Panc1 (cell line): ENCODE measurements at regions of chr5 and their contacts with region 1.

Region 1: GRCh38 chr5:177035976-177036375 is 13.5 kb downstream of the ZNF346 start:
- DNase-seq: no peak
- ATAC-seq: no peak
- H3K4me3 ChIP-seq: no peak overlapping the region
- H3K27ac ChIP-seq: no peak overlapping the region
- H3K4me1 ChIP-seq: no peaks in the 10 kb centered on the region
- H3K27me3 ChIP-seq: no peaks in the 10 kb centered on the region
- CTCF ChIP-seq: no peak

Region 2: DNA sequence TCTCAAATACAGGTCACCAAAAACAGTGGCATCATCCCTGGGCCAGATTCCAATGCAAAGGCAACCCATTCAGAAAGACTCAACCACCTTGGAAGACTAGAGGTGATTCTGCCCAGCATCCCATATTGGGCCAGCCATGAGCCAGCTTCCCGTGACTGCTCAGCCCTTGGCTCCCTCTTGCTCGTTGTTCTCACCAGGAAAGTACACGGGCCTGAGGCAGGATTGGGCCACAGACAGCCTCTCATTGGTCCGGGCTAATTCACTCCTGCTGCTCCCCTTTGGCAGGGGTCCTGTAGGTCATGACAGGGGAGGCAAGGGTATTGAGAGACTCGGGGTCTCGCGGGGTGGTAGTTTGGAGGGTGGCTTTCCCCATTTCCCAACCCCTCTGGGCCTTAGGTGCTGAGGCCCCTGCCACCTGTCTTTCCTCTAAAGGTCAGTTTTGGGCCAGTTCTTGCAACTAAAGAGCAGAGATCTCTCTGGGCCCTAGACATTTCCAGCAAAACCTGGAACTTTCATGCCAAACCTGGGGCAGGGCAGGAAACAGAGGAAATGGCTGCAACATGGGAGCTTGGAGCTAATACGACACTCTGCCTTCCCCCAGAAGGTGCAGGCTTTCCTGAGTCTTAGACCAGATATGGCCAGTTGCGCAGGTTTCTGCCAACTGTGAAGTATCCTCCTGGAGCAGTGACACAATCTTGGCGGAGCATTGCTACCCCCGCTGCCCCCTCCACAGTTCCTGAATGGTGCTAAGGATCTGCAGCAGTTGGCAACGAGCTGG is 28.7 kb after region 1 on chr5:
- CTCF ChIA-PET with region 1: no interaction called
- POLR2A ChIA-PET with region 1: interaction called, 15 read pairs
- in situ Hi-C with region 1: no loop called
- intact Hi-C with region 1: no loop called
- DNase-seq: no peak
- ATAC-seq: no peak
- H3K4me3 ChIP-seq: no peak overlapping the region
- H3K27ac ChIP-seq: no peak overlapping the region
- H3K4me1 ChIP-seq: no peaks in the 10 kb centered on the region
- H3K27me3 ChIP-seq: no peaks in the 10 kb centered on the region
- CTCF ChIP-seq: no peak